Activated CD4-positive, alpha-beta memory T cell treated with anti-CD3 and anti-CD28 coated beads for 36 hours (primary cell): ENCODE measurements at regions of chr9 and their contacts with region 1.

Region 1: GRCh38 chr9:89602978-89603766 is 1.6 kb upstream of the GADD45G start:
- DNase-seq: peak; percentile 94
- H3K4me3 Mint-ChIP-seq: peak overlapping the region; percentile 71
- H3K27ac Mint-ChIP-seq: peak overlapping the region; percentile 58
- H3K4me1 Mint-ChIP-seq: peaks cover 28% of the 10 kb centered on the region
- H3K27me3 Mint-ChIP-seq: no peaks in the 10 kb centered on the region

Region 2: GRCh38 chr9:89461265-89461664 is 141.9 kb before region 1 on chr9:
- CTCF ChIA-PET with region 1: no interaction called
- POLR2A ChIA-PET with region 1: no interaction called
- intact Hi-C with region 1: no loop called
- DNase-seq: peak; percentile 77
- H3K4me3 Mint-ChIP-seq: no peak overlapping the region
- H3K27ac Mint-ChIP-seq: peak overlapping the region; percentile 6
- H3K4me1 Mint-ChIP-seq: peaks cover 97% of the 10 kb centered on the region
- H3K27me3 Mint-ChIP-seq: no peaks in the 10 kb centered on the region

Region 3: GRCh38 chr9:89613912-89614892 is 11.0 kb after region 1 on chr9:
- CTCF ChIA-PET with region 1: interaction called, 29 read pairs
- POLR2A ChIA-PET with region 1: interaction called, 6 read pairs
- intact Hi-C with region 1: loop called (anchors 1 kb)
- DNase-seq: no peak
- H3K4me3 Mint-ChIP-seq: no peak overlapping the region
- H3K27ac Mint-ChIP-seq: no peak overlapping the region
- H3K4me1 Mint-ChIP-seq: peaks cover 15% of the 10 kb centered on the region
- H3K27me3 Mint-ChIP-seq: no peaks in the 10 kb centered on the region

Region 4: DNA sequence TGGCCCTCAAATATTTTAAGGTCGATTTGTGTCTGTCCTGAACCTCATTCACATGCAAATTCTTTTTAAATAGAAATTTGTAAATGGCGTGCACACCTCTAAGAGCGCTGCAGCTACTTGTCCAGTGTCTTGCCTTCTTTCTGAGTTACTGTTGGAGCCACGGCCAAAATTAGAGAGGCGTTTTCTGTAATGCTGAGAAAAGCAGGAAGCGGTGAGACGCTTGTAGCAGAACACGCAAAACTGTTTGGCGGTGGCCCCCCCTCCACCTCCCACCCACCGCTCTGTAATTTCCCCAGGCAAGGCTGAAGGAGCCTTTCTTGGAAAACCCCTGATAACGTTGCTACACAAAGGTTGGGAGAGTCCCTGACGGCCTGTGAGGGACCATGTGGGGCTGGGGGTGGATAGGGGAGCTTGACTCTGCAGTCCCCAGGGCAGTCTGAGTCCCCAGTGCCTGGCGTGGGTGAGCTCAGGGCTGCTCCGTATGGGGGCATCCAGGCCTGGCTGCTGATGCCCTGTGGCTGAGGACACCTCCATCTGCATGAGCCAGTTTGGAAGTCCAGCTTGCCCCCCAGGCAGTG is 98.1 kb after region 1 on chr9:
- CTCF ChIA-PET with region 1: interaction called, 13 read pairs
- POLR2A ChIA-PET with region 1: interaction called, 5 read pairs
- intact Hi-C with region 1: loop called (anchors 1 kb)
- DNase-seq: peak; percentile 93
- H3K4me3 Mint-ChIP-seq: peak overlapping the region; percentile 52
- H3K27ac Mint-ChIP-seq: peak overlapping the region; percentile 34
- H3K4me1 Mint-ChIP-seq: peaks cover 44% of the 10 kb centered on the region
- H3K27me3 Mint-ChIP-seq: no peaks in the 10 kb centered on the region

Region 5: DNA sequence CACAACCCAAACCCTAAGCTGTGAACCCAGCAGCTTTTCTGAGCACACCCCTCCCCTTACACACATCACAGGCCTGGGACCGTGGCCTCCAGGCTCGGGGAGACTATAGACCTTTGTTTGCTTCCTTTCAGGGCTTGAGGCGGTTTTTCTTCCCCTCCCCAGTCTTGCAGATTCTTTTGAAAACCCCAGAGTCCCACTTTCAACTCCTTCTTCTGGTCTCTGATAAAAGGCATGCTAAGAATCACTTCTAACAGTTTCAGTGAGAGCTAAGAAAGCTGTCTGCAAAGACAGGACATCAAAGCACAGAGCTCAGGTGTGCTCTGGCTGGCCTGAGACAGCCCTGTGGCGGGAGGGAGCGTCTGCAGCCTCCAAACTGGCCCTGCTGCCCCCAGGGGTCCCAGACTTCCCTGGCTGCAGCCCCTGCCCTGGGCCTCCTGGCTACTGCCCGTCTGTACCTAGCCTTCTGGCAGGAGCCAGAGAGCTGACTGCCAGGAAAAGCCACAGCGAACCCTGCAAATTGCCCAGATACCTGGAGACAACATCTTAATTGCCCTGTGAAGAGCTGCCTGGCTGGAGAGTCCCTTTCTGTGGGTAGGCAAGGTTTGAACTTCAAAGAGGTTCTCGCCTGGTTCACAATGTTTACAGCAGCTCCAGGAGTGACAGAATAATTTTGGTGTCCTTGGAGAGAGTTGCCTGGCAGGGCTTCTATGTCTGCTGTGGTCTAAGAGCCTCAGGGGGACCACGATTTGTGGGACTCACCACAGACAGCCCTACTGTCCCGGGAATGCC is 140.6 kb after region 1 on chr9:
- CTCF ChIA-PET with region 1: interaction called, 19 read pairs
- POLR2A ChIA-PET with region 1: interaction called, 5 read pairs
- intact Hi-C with region 1: loop called (anchors 1 kb)
- DNase-seq: peak; percentile 65
- H3K4me3 Mint-ChIP-seq: no peak overlapping the region
- H3K27ac Mint-ChIP-seq: peak overlapping the region; percentile 64
- H3K4me1 Mint-ChIP-seq: peaks cover 78% of the 10 kb centered on the region
- H3K27me3 Mint-ChIP-seq: no peaks in the 10 kb centered on the region

Region 6: GRCh38 chr9:89929673-89930480 is 326.7 kb after region 1 on chr9:
- CTCF ChIA-PET with region 1: interaction called, 19 read pairs
- POLR2A ChIA-PET with region 1: no interaction called
- intact Hi-C with region 1: no loop called
- DNase-seq: no peak
- H3K4me3 Mint-ChIP-seq: no peak overlapping the region
- H3K27ac Mint-ChIP-seq: no peak overlapping the region
- H3K4me1 Mint-ChIP-seq: peaks cover 3% of the 10 kb centered on the region
- H3K27me3 Mint-ChIP-seq: peaks cover 11% of the 10 kb centered on the region

Region 7: GRCh38 chr9:90095682-90096081 is 492.5 kb after region 1 on chr9:
- CTCF ChIA-PET with region 1: interaction called, 258 read pairs
- POLR2A ChIA-PET with region 1: interaction called, 6 read pairs
- intact Hi-C with region 1: no loop called
- DNase-seq: peak; percentile 19
- H3K4me3 Mint-ChIP-seq: no peak overlapping the region
- H3K27ac Mint-ChIP-seq: no peak overlapping the region
- H3K4me1 Mint-ChIP-seq: peaks cover 18% of the 10 kb centered on the region
- H3K27me3 Mint-ChIP-seq: peaks cover 7% of the 10 kb centered on the region